Activated CD8-positive, alpha-beta T cell treated with anti-CD3 and anti-CD28 coated beads for 36 hours (primary cell): ENCODE measurements at regions of chr12 and their contacts with region 1.

Region 1: GRCh38 chr12:104958009-104958945 is at the start of gene SLC41A2:
- DNase-seq: peak; percentile 92
- ATAC-seq: peak; percentile 88
- H3K4me3 Mint-ChIP-seq: peak within 1 kb of the TSS; percentile 78
- H3K27ac Mint-ChIP-seq: peak within 1 kb of the TSS; percentile 84
- H3K4me1 Mint-ChIP-seq: peaks cover 24% of the 10 kb centered on the region
- H3K27me3 Mint-ChIP-seq: peaks cover 13% of the 10 kb centered on the region
- CTCF ChIP-seq: no peak
- total RNA-seq, gene SLC41A2: 5.3 to 11.1 TPM

Region 2: DNA sequence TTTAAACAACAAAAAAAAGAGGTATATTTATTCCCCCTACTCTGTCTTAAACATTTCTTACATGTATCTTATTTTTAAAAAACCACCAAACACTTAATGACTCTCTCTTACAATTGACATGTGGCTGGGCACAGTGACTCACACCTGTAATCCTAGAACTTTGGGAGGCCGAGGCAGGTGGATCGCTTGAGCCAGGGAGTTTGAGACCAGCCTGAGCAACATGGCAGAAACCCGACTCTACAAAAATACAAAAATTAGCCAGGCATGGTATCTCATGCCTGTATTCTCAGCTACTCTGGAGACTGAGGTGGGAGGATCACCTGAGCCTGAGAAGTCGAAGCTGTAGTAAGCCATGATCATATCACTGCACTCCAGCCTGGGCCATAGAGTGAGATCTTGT is 16.2 kb before region 1 on chr12:
- CTCF ChIA-PET with region 1: interaction called, 12 read pairs
- POLR2A ChIA-PET with region 1: interaction called, 3 read pairs
- intact Hi-C with region 1: no loop called
- DNase-seq: no peak
- ATAC-seq: no peak
- H3K4me3 Mint-ChIP-seq: no peak overlapping the region
- H3K27ac Mint-ChIP-seq: no peak overlapping the region
- H3K4me1 Mint-ChIP-seq: peaks cover 4% of the 10 kb centered on the region
- H3K27me3 Mint-ChIP-seq: peaks cover 4% of the 10 kb centered on the region
- CTCF ChIP-seq: no peak

Region 3: DNA sequence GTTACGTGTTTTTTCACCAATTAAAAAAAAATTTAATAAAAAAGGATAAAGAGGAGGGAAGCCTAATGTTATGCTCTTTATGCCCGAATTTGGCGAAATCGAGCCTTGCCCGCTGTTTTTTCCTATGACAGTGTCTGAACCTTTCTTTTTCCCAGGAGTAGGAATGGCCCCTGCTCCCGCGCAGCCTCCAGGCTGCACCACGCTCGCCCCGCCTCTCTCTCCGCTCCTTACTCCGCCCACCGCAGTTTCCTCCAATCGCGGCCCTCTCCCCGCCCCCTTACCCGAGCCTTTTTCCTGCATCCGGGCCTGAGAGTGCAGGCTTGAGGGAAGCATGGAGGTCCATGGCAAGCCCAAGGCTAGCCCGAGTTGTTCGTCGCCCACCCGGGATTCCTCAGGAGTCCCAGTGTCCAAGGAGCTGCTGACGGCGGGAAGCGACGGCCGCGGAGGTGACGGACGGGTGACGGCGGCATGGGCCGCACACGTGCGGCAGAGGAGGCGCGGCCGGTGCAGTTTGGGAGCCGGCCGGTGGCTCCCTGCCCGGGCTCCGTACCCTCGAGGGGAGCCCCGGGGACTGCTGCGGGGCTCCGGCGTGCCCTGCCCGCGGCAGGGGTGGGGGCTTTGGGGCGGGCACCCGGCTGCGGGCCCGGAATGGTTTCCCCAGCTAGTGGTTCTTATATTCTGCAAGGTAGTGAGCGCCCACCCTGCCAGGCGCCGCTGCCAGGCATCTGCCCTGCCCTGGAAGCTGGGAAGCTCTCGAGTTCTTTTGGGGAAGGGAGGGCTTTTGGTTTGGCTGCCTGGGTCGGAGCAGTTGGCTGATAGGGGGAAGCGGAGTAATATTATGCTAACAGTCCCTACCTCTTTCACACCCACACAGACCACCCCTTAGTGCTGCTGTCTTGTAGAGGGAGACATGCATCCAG is 28.0 kb after region 1 on chr12 and contains the start of gene NOPCHAP1:
- CTCF ChIA-PET with region 1: interaction called, 13 read pairs
- POLR2A ChIA-PET with region 1: interaction called, 4 read pairs
- intact Hi-C with region 1: no loop called
- DNase-seq: peak; percentile 91
- ATAC-seq: peak; percentile 97
- H3K4me3 Mint-ChIP-seq: peak within 1 kb of the TSS; percentile 90
- H3K27ac Mint-ChIP-seq: peak within 1 kb of the TSS; percentile 75
- H3K4me1 Mint-ChIP-seq: peaks cover 44% of the 10 kb centered on the region
- H3K27me3 Mint-ChIP-seq: peaks cover 5% of the 10 kb centered on the region
- CTCF ChIP-seq: no peak
- total RNA-seq, gene NOPCHAP1: 39.4 to 42.0 TPM